ENCODE measurements at regions of chr10 and their contacts with region 1.

Region 1: GRCh38 chr10:122879339-122880273 is at the start of gene FAM24B:
- DNase-seq: peak; percentile 95
- H3K4me3 Mint-ChIP-seq: peak within 1 kb of the TSS; percentile 86
- H3K27ac Mint-ChIP-seq: peak within 1 kb of the TSS; percentile 77
- H3K4me1 Mint-ChIP-seq: peaks cover 51% of the 10 kb centered on the region
- H3K27me3 Mint-ChIP-seq: no peaks in the 10 kb centered on the region
- total RNA-seq, gene FAM24B: 11.5 to 12.5 TPM

Region 2: GRCh38 chr10:122894261-122894944 is 14.8 kb after region 1 on chr10:
- CTCF ChIA-PET with region 1: no interaction called
- POLR2A ChIA-PET with region 1: no interaction called
- DNase-seq: no peak
- H3K4me3 Mint-ChIP-seq: no peak overlapping the region
- H3K27ac Mint-ChIP-seq: no peak overlapping the region
- H3K4me1 Mint-ChIP-seq: peaks cover 5% of the 10 kb centered on the region
- H3K27me3 Mint-ChIP-seq: no peaks in the 10 kb centered on the region

Region 3: GRCh38 chr10:122953827-122954730 is 74.5 kb after region 1 on chr10 and contains the start of gene C10orf88:
- CTCF ChIA-PET with region 1: no interaction called
- POLR2A ChIA-PET with region 1: interaction called, 10 read pairs
- DNase-seq: peak; percentile 98
- H3K4me3 Mint-ChIP-seq: peak within 1 kb of the TSS; percentile 86
- H3K27ac Mint-ChIP-seq: peak within 1 kb of the TSS; percentile 82
- H3K4me1 Mint-ChIP-seq: peaks cover 40% of the 10 kb centered on the region
- H3K27me3 Mint-ChIP-seq: peaks cover 17% of the 10 kb centered on the region
- total RNA-seq, gene C10orf88: 12.6 to 15.1 TPM